ENCODE measurements at regions of chr9 and their contacts with region 1.

Region 1: DNA sequence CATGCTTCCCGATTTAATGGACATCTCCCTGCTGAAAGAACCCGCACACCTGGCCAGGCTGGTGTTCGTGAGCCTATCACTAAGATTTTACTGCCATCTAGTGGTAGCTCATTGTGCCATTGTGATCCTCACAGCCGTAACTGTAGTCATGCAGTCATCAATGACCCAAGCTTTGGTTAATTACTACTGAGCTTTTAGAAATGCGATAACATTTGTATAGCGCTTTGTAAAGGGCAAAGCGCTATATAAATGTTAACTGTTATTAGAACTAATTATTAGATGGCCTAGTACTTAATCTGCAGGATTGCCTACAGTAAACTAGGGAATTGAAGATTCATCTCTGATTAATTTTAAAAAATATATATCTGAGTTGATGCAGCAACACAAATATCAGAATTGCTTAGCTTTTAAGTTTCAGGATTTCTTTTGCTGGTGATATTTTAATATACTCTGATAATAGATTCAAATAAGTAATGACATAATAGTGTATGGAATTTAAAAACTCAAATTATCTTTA is 90.2 kb downstream of the HACD4 start:
- DNase-seq: peak; percentile 36
- ATAC-seq: peak; percentile 84 to 92

Region 2: DNA sequence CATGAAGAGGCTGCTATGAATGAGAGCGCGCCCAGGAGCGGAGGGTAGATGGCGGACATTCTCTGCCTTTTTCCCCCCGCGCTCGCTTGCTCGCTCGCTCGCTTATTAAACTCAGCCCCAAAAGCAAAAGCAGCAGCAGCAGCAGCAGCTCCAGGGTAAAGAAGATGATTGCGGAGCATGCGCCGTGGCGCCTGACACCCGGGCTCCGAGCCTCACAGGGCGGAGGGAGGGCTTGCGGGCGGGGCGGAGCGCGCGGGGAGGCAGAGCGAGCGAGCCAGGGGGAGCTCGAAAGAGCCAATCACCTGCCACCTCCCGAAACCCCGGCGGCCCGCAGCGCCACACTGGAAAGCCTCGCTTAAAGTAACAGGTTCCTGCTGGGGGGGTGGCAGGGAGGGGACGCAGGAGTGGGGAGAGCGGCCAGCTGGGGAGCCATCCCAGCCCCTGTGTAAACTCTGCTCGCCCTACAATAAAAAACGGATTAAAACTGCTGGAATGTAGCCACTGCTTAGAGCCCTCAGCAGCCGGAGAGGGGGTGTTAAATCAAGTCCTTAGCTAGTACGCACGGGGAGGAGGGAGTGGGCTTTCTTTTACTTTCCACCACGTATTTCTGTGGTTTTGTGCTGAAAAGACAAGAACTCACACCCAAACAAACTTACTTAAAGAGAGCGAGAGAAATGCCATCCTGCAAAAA is 318.8 kb before region 1 on chr9 and contains the start of gene MLLT3:
- intact Hi-C with region 1: loop called in 1 of 2 experiments (anchors 5 kb)
- DNase-seq: peak; percentile 97
- ATAC-seq: peak; percentile 95 to 98
- total RNA-seq, gene MLLT3: 5.3 to 10.2 TPM

Measured in left cardiac atrium (tissue), 4 donors.